Common myeloid progenitor, CD34-positive (primary cell): ENCODE measurements at regions of chr16 and their contacts with region 1.

Region 1: DNA sequence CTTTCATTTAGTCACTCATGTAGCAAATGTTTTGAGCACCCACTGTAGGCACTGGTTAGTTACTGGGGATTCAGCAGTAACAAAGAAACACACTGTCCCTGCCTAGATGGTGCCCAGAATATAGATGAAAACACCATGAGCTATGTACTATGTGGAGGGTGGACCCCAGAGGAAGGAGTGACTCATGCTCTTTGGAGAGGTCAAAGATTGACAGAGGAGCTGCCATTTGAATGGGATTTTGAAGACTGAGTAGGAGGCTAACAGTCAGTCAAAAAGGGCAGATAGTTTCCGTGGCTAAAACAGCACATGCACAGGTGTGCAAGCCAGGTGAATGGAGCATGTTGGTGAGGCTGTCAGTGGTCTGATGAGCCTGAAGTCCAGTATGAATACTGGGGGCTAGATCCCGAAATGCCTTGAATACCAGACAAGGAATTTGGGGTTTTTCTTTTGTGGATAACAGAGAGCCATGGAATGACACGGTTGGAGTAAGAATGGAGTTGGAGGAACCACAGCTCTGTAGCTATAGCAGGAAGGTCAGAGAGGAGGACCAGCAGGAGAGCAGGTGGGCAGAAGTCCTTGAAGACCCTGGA is 6.1 kb downstream of the IL21R start:
- DNase-seq: peak in 1 of 3 donors; percentile 46
- H3K4me3 ChIP-seq: no peak overlapping the region
- H3K27ac ChIP-seq: no peak overlapping the region
- H3K4me1 ChIP-seq: peaks cover 0 to 41% (median 17%) of the 10 kb centered on the region in 4 experiments
- H3K27me3 ChIP-seq: no peaks in the 10 kb centered on the region

Region 2: GRCh38 chr16:27426423-27427408 is 18.6 kb after region 1 on chr16:
- CTCF ChIA-PET with region 1: interaction called, 33 read pairs
- POLR2A ChIA-PET with region 1: interaction called, 28 read pairs
- DNase-seq: peak; percentile 65 to 95 (median 92)
- H3K4me3 ChIP-seq: peak overlapping the region in 1 of 7 experiments; percentile 25
- H3K27ac ChIP-seq: no peak overlapping the region
- H3K4me1 ChIP-seq: peaks cover 4 to 48% (median 26%) of the 10 kb centered on the region in 4 experiments
- H3K27me3 ChIP-seq: no peaks in the 10 kb centered on the region